Activated CD4-positive, alpha-beta memory T cell treated with anti-CD3 and anti-CD28 coated beads, Interleukin-2, amount 10 ng/mL, durations not matched to agents 7 days and 5 days (primary cell): ENCODE measurements at regions of chr18 and their contacts with region 1.

Region 1: GRCh38 chr18:13611601-13612195 is 114.7 kb downstream of the FAM210A start:
- DNase-seq: peak; percentile 32
- H3K4me3 Mint-ChIP-seq: peak overlapping the region; percentile 69
- H3K27ac Mint-ChIP-seq: peak overlapping the region; percentile 96
- H3K4me1 Mint-ChIP-seq: peaks cover 92% of the 10 kb centered on the region
- H3K27me3 Mint-ChIP-seq: no peaks in the 10 kb centered on the region

Region 2: GRCh38 chr18:13375302-13376255 is 236.1 kb before region 1 on chr18:
- CTCF ChIA-PET with region 1: no interaction called
- POLR2A ChIA-PET with region 1: interaction called, 14 read pairs
- DNase-seq: peak; percentile 82
- H3K4me3 Mint-ChIP-seq: peak overlapping the region; percentile 37
- H3K27ac Mint-ChIP-seq: peak overlapping the region; percentile 76
- H3K4me1 Mint-ChIP-seq: peaks cover 66% of the 10 kb centered on the region
- H3K27me3 Mint-ChIP-seq: no peaks in the 10 kb centered on the region

Region 3: GRCh38 chr18:13566941-13567746 is 44.6 kb before region 1 on chr18:
- CTCF ChIA-PET with region 1: interaction called, 4 read pairs
- POLR2A ChIA-PET with region 1: interaction called, 39 read pairs
- DNase-seq: peak; percentile 42
- H3K4me3 Mint-ChIP-seq: peak overlapping the region; percentile 27
- H3K27ac Mint-ChIP-seq: peak overlapping the region; percentile 83
- H3K4me1 Mint-ChIP-seq: peaks cover 75% of the 10 kb centered on the region
- H3K27me3 Mint-ChIP-seq: no peaks in the 10 kb centered on the region

Region 4: DNA sequence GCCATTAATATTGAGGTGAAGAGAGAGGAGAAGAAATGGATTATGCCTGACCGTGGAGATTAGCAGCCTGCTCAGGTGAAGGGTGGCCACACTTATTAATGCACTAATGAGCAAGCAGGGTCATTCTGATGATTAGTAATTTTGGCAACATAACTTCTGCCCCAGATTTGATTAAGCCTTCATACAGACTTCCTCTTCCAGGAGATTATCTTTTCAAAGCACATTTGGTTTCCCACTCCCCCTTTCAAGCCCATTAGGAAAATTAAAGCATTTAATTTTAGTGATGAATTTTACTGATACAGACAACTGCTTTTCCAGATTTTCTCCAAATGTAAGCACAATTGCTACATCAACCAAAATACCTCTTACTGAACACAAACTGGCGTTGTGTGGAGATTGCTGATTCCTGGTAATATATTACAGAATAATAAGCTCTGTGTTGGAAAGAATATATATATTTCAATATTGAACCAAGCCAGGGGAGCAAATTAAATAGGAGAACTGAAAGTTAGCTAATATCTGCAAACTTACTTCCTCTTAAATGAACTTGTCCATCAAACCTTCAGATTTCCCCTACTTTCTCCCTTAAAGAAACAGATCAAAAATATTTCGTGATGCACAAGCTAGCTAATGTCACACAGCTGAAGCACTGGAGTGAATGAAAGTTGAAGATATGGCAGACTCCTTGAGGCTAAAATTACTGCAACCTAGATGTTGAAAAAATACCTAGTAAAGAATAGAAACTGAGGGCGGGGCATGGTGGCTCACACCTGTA is 26.1 kb before region 1 on chr18:
- CTCF ChIA-PET with region 1: interaction called, 10 read pairs
- POLR2A ChIA-PET with region 1: interaction called, 76 read pairs
- DNase-seq: no peak
- H3K4me3 Mint-ChIP-seq: no peak overlapping the region
- H3K27ac Mint-ChIP-seq: peak overlapping the region; percentile 1
- H3K4me1 Mint-ChIP-seq: peaks cover 62% of the 10 kb centered on the region
- H3K27me3 Mint-ChIP-seq: no peaks in the 10 kb centered on the region

Region 5: DNA sequence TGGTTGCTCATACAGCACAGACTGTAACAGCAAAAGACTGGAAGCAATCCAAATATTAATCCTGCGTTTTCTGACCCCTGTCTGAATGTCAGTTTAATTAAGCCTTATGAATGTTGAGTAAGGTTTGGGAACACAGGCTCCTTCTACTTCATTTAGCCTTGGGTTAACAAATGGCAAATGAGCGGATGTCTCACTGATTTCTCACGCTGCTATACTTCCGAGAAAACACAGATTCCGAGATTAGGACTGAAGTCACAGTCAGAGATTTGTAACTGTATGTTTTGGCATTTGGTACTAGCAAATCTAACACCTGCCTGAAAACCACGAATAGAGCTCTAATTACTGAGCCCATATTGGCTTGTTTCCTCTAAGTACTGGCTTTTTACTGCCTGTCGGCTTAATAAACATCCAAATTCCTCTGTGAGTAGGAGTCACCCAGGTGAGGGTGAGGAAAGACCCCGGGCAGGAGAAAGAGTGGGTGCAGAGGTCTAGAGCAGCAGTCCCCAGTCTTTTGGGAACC is 222.9 kb after region 1 on chr18:
- CTCF ChIA-PET with region 1: no interaction called
- POLR2A ChIA-PET with region 1: no interaction called
- DNase-seq: no peak
- H3K4me3 Mint-ChIP-seq: no peak overlapping the region
- H3K27ac Mint-ChIP-seq: no peak overlapping the region
- H3K4me1 Mint-ChIP-seq: no peaks in the 10 kb centered on the region
- H3K27me3 Mint-ChIP-seq: peaks cover 15% of the 10 kb centered on the region